ENCODE measurements at regions of chr7 and their contacts with region 1.

Region 1: DNA sequence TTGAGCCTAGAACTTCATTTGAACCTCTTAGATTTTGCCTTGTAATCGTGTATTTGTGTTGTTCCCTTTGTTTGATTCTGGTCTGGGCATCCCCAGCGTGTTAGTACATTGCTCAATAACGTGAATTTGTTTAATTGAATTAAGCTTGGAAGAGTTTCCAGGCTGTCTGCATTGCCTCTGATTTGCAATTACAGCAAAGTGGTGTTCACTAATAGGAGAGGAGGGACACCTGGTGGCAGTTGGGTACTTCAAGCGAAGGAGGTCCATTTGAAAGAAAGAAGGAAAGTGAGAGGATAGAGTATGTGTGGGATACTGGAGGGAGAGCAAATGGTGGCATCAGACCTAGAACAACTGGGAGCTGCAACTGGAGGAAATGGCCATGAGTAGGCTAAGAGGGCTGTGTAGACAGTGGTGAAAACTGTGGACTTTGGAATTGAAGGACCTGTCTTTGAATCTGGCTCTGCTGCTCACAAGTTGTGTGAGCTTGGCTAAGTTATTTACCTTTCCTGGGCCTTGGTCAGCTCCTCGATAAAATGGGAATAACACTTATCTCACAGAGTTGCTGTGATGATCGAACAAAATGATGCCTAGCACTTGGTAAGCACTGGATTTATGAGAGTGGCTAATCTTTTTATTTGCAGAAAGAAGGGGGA is 15.1 kb downstream of the LSMEM1 start:
- DNase-seq: no peak
- H3K4me3 ChIP-seq: no peak overlapping the region
- CTCF ChIP-seq: peak; percentile 49

Region 2: DNA sequence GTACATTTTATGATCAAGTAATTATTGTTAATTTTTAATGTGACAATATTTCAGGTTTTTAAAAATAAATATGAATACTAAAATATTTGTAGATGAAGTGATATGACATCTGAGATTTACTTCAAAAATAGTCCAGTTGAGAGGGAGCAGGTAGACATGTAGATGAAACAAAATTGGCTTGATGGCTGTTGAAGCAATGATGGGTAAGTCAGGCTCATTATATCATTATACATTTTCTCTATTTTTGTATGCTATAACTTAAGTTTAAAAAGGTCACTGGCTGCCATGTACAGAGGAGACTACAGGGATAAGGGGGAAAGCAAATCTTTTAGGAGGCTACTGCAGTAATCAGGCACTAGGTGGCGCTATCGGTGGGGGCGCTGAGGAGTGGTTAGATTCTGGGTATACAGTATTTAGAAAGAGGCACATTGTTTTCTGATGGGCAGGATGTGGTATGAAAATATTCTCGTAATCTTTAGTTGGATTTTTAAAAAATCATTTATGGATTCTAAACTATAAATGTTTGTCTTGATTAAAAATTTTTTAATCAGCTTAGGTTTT is 743.8 kb before region 1 on chr7:
- CTCF ChIA-PET with region 1: interaction called, 10 read pairs
- POLR2A ChIA-PET with region 1: no interaction called
- DNase-seq: no peak
- H3K4me3 ChIP-seq: no peak overlapping the region
- CTCF ChIP-seq: peak; percentile 80

Region 3: GRCh38 chr7:112362731-112363131 is 133.2 kb before region 1 on chr7:
- CTCF ChIA-PET with region 1: no interaction called
- POLR2A ChIA-PET with region 1: no interaction called
- DNase-seq: no peak
- H3K4me3 ChIP-seq: no peak overlapping the region
- CTCF ChIP-seq: no peak

Region 4: DNA sequence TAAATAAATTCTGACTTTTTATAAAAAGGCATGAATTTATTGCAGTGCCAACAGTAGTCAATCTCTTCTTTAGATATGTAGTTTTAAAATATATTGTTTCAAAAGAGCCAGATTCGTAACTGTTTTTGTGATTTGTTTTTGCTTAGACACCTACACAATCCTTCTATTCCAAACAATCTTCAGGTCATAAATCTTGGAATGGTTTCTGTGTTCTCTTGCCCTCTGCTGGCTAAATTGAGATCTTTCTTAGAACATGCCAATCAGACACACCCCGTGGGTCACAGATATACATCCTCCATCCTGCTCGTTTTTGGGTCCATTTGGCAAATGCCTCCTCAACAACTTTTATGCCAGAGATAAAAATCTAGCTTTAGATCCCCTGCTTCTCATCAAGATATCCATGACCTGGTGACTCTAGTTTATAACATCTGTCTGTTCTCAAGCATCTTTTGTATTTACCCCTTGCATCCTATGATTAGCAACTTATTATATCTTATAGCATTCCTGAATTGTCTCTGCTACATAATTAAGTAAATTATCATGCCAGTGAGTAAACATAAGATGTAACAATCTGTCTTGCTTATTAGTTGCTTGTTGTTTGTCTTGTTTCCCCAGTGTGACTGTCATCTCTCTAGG is 81.0 kb before region 1 on chr7:
- CTCF ChIA-PET with region 1: interaction called, 17 read pairs
- POLR2A ChIA-PET with region 1: no interaction called
- DNase-seq: no peak
- H3K4me3 ChIP-seq: no peak overlapping the region
- CTCF ChIP-seq: peak; percentile 45

Region 5: GRCh38 chr7:112481833-112482670 is 13.9 kb before region 1 on chr7:
- CTCF ChIA-PET with region 1: interaction called, 62 read pairs
- POLR2A ChIA-PET with region 1: no interaction called
- DNase-seq: peak; percentile 96
- H3K4me3 ChIP-seq: no peak overlapping the region
- CTCF ChIP-seq: no peak

Measured in AG04449 (cell line).